Motor neuron (in vitro differentiated cells): ENCODE measurements at regions of chr16 and their contacts with region 1.

Region 1: DNA sequence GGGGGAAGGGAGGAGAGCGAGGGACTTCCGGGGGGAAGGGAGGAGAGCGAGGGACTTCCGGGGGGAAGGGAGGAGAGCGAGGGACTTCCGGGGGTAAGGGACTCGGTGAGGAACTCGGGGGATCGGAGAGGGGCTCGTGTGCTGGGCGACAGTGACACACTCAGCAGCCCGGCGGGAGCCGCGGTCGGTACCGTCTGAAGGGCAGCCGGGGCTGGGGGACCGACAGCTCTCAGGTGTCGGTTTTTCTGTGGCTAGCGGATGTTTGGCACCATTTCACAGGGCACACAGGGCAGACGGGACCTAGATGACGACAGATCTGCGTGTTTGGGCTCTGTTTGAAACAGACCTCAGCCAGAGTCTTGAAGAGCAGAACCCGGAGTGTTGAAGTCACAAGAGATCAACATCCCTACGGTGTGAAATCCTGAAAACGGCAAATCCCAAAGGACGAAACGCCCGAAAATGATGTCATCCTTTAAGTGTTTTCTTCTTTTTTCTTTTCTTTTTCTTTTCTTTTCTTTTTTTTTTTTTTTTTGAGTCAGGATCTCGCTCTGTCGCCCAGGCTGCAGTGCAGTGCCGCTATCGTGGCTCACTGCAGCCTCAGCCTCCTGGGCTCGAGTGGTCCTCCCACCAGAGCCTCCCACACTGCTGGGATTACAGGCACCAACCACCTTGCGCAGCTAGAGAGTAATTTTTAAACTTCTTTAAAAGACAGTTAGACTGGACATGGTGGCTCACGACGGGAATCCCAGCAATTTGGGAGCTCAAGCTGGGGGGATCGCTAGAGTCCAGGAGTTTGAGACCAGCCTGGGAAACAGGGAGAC is 23.9 kb downstream of the ZNF778 start:
- ATAC-seq: peak; percentile 70 to 90 (median 84)
- H3K4me3 ChIP-seq: peak overlapping the region; percentile 61 to 96 (median 91)
- H3K27ac ChIP-seq: peak overlapping the region; percentile 84 to 89
- H3K4me1 ChIP-seq: peaks cover 0 to 2% of the 10 kb centered on the region in 2 donors

Region 2: DNA sequence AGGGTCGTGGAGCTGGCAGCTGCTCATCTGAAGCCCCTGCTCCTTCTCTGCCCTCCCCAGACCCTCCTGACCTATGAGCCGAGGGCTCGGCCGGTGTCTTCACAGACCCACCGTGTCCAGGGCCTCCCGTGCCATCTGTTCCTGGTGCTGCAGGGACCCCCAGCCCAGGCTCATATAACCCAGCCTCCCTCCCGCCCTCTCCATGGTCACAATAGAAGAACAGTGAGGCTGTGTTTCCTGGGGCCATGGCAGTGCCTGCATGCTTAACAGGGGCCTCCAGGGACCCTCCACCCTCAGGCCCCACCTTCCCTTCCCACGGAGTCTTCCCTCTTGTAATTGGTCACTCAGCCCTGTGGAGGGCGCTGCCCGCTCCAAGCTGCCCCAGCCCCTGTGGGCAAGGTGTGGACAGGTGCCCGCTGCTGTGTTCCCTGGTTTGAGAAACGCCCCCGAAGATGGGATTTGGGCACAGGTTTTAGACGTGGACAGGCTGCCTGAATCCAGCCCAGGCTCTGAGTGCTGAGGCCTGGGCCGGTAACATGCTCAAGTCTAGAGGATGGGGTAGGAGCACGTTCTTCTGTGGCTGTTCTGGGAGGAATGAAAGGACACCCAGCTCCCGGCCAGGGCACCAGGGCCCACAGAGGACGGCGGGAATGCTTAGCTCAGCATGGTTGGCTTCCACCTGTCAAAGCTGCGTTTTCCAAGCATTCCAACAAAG is 108.9 kb before region 1 on chr16:
- in situ Hi-C with region 1: no loop called
- ATAC-seq: no peak
- H3K4me3 ChIP-seq: no peak overlapping the region
- H3K27ac ChIP-seq: no peak overlapping the region
- H3K4me1 ChIP-seq: peaks cover 0 to 15% of the 10 kb centered on the region in 2 donors

Region 3: DNA sequence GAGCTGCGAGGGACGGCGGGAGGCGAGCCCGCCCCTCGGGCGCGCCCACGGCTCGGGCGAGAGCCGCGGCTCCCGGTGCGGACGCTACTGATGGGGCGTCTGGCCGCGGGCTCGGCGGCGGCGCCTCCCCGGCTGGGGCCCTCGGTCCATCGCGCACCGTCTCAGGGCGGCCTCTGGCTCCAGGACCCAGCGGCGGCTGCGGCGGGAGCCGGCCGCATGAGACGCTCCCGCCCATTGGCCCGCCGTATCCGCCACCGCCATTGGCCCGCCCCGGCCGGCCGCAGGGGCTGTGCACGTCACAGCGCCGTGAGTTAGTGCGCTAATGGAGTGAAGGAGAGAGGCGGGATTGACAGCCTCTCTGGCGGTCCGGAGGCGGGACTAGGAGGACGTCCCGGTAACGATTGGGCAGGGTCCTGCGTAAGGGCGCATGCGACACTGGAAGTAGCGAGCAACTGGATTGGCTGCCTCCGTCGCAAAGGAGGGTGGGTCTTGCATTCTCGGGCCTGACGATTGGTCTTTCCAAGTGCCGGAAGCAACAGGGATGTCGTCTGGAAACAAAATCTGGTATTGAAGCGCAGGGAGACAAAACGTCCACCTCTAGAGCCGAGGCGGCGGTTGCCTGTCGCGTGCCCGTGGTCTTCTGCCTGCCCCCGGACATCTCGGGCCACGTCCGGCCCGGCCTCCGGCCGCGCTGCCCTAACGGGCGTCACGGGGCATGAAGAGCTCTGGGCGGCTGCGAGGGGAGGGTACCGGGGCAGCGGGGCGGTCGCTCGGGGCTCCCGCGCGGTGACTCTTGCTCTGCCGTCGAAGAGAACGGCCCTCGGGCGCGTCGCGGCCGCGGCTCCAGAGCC is 249.2 kb after region 1 on chr16 and contains the start of gene ANKRD11:
- in situ Hi-C with region 1: loop called in 1 of 9 experiments (anchors 25 kb)
- ATAC-seq: peak; percentile 90 to 95 (median 94)
- H3K4me3 ChIP-seq: peak within 1 kb of the TSS; percentile 74 to 96 (median 89)
- H3K27ac ChIP-seq: peak within 1 kb of the TSS; percentile 96 to 98
- H3K4me1 ChIP-seq: peaks cover 24 to 30% of the 10 kb centered on the region in 2 donors
- total RNA-seq, gene ANKRD11: 22.6 to 148 (median 52.5) TPM